ENCODE measurements at regions of chr20 and their contacts with region 1.

Region 1: DNA sequence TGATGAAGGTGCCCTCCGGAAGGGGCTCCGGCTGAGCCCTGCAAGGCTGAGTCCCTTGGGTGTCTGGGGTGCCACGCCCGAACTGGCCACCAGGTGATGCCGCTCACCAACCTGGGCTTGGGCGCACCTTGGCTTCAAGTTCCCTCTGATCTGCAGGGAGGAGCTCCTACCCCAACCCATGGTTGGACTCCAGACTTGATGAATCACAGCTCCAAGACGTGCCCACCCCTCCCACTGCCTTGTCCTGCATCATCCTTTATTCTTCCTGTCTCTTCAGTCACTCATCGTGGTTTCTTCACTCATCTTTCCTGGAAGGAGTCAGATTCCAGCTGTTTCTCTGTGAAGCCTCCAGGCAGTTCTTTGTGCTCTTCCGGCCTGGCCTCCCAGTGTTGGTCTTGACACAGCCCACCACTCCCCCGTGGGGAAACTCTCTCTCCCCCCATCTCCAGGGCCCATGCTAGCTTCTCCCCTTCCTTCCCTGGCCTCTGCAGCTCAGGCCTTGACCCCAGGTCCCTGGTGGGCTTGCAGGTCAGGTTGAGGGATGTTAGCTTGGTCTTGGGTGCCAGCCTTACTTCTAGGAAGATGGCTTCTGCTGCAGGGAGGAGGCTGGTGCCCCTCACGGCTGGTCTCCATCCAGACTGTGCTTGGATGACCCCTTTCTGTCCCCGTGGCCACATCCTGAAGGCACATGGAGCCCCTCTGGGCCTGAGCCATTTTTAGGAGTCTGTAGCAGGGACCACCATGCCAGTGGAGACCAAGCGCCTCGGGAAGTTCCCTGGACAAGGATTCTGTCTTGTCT is 2.6 kb upstream of the ZBP1 start:
- DNase-seq: peak; percentile 83
- ATAC-seq: no peak
- H3K4me3 Mint-ChIP-seq: no peak overlapping the region
- H3K27ac Mint-ChIP-seq: no peak overlapping the region
- H3K4me1 Mint-ChIP-seq: peaks cover 79% of the 10 kb centered on the region
- H3K27me3 Mint-ChIP-seq: peaks cover 2% of the 10 kb centered on the region

Region 2: GRCh38 chr20:57605878-57606277 is 16.9 kb before region 1 on chr20:
- CTCF ChIA-PET with region 1: interaction called, 17 read pairs
- POLR2A ChIA-PET with region 1: interaction called, 4 read pairs
- DNase-seq: no peak
- ATAC-seq: no peak
- H3K4me3 Mint-ChIP-seq: no peak overlapping the region
- H3K27ac Mint-ChIP-seq: no peak overlapping the region
- H3K4me1 Mint-ChIP-seq: peaks cover 13% of the 10 kb centered on the region
- H3K27me3 Mint-ChIP-seq: no peaks in the 10 kb centered on the region

Region 3: GRCh38 chr20:57654363-57654997 is 31.7 kb after region 1 on chr20:
- CTCF ChIA-PET with region 1: interaction called, 75 read pairs
- POLR2A ChIA-PET with region 1: interaction called, 3 read pairs
- DNase-seq: peak; percentile 75
- ATAC-seq: peak; percentile 72
- H3K4me3 Mint-ChIP-seq: no peak overlapping the region
- H3K27ac Mint-ChIP-seq: no peak overlapping the region
- H3K4me1 Mint-ChIP-seq: peaks cover 30% of the 10 kb centered on the region
- H3K27me3 Mint-ChIP-seq: peaks cover 4% of the 10 kb centered on the region

Region 4: DNA sequence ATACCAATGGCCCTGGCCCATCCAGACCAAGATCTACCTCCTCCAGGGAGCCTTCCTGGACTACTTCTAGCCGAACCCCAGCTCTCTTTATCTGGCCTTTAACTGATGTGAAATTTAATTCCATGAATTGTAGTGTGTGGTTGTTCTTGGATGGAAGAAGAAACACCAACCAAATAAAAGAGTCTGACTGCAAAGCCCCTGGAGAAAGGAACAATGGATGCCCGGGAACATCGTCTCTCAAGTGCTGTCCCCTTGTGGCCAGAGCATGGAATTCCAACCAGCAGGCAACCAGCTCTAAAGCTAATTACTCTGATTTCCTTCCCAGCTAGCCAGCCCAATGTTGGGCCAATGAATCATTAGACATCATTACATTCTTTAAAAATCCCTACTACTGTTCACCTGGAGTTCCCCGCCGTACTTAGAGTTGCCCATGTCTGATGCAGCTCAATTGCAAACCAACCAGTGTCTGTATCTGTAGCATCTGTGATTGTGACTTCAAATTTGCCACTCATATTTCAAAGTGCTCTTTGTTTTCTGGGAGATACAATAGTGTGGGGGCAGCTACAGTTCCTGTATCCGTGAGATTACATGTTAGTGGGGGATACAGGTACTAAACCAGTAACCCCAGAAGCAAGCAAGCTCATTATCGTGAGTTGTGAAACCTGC is 464.5 kb after region 1 on chr20:
- CTCF ChIA-PET with region 1: interaction called, 14 read pairs
- POLR2A ChIA-PET with region 1: interaction called, 3 read pairs
- DNase-seq: peak; percentile 30
- ATAC-seq: no peak
- H3K4me3 Mint-ChIP-seq: no peak overlapping the region
- H3K27ac Mint-ChIP-seq: no peak overlapping the region
- H3K4me1 Mint-ChIP-seq: no peaks in the 10 kb centered on the region
- H3K27me3 Mint-ChIP-seq: no peaks in the 10 kb centered on the region